GM12878 (cell line): ENCODE measurements at regions of chr5 and their contacts with region 1.

Region 1: GRCh38 chr5:172714491-172715421 is 56.2 kb downstream of the DUSP1 start:
- DNase-seq: no peak
- ATAC-seq: peak; percentile 89
- H3K4me3 ChIP-seq: no peak overlapping the region
- H3K27ac ChIP-seq: no peak overlapping the region
- H3K4me1 ChIP-seq: no peaks in the 10 kb centered on the region
- H3K27me3 ChIP-seq: no peaks in the 10 kb centered on the region; a peak in 1 of 4 replicates
- CTCF ChIP-seq: peak; percentile 66 to 95 (median 88)
- EP300 ChIP-seq: no peak
- POLR2A ChIP-seq: no peak
- RAD21 ChIP-seq: peak; percentile 40

Region 2: DNA sequence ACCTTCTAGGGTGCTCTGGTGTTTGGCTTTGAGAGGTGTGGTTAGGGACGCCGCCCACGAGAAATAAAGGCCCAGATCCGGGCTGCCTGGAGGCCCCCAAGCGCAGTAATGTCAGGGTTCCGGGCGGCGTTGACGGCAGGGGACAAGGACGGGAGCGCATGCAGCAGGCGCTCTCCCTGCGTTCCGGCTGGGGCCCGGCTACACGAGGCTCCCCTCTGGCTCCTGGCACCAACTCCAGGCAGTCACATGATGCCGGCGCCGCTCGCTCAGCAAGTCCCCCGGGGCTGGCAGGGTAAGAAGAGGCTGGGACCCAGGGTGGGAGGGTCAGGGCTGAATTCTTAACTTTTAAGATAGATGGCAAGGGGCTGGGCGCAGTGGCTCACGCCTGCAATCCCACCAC is 459.3 kb before region 1 on chr5:
- CTCF ChIA-PET with region 1: no interaction called
- POLR2A ChIA-PET with region 1: no interaction called
- RAD21 ChIA-PET with region 1: no interaction called
- SMC1A ChIA-PET with region 1: no interaction called
- in situ Hi-C with region 1: no loop called
- intact Hi-C with region 1: no loop called
- DNase-seq: no peak
- ATAC-seq: no peak
- H3K4me3 ChIP-seq: no peak overlapping the region
- H3K27ac ChIP-seq: no peak overlapping the region
- H3K4me1 ChIP-seq: no peaks in the 10 kb centered on the region
- H3K27me3 ChIP-seq: no peaks in the 10 kb centered on the region
- CTCF ChIP-seq: no peak
- EP300 ChIP-seq: no peak
- POLR2A ChIP-seq: no peak
- RAD21 ChIP-seq: no peak

Region 3: DNA sequence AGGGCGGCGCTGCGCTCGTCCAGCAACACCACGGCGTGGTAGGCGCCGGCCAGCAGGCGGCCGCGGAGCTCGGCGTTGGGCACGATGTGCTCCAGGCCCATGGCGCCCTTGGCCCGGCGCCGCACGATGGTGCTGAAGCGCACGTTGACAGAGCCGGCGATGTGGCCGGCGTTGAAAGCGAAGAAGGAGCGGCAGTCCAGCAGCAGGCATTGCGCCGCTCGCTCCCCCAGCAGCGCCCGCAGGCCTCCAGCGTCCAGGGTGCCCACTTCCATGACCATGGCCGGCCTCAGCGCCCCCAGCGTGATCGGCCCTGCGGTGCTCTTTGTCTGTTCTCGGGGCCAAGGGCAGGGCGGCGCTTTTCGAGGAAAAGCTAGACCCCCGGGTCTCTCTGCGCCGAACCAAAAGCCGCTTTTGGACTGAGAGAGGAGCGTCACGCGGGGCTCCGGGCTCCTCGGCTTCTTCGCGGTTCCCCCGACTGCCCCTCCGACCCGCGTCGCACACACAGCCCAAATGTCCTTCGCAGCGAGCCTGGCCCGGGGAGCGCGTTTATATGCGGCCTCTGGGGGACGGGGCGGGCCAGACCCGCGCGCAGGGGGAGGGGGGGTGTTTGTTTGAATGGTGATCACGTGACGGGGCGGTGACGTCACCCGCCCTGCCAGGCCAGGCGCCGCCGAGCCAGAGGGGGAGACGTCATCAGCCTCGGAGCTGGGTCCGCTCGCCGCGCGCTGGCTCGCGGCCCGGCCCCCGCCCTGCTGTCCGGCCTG is 56.1 kb after region 1 on chr5 and contains the start of gene DUSP1:
- CTCF ChIA-PET with region 1: interaction called, 40 read pairs
- POLR2A ChIA-PET with region 1: interaction called, 4 read pairs
- RAD21 ChIA-PET with region 1: interaction called, 13 read pairs
- SMC1A ChIA-PET with region 1: interaction called, 13 read pairs
- in situ Hi-C with region 1: no loop called
- intact Hi-C with region 1: loop called (anchors 2 kb)
- DNase-seq: no peak
- ATAC-seq: peak; percentile 76
- H3K4me3 ChIP-seq: peak within 1 kb of the TSS; percentile 73
- H3K27ac ChIP-seq: peak within 1 kb of the TSS; percentile 72
- H3K4me1 ChIP-seq: peaks cover 23% of the 10 kb centered on the region
- H3K27me3 ChIP-seq: no peaks in the 10 kb centered on the region
- CTCF ChIP-seq: peak; percentile 57 to 65 (median 59); a peak in 5 of 6 replicates
- EP300 ChIP-seq: 0 out of 4 replicates have a peak, but pooled peaks of 1 of the 2 experiments have one; percentile 32
- POLR2A ChIP-seq: peak; percentile 95
- RAD21 ChIP-seq: peak; percentile 48
- polyA plus RNA-seq, gene DUSP1: 1.4 to 1.9 TPM

Region 4: GRCh38 chr5:172833686-172834414 is 119.1 kb after region 1 on chr5 and contains the start of gene ERGIC1:
- CTCF ChIA-PET with region 1: interaction called, 8 read pairs
- POLR2A ChIA-PET with region 1: no interaction called
- RAD21 ChIA-PET with region 1: interaction called, 4 read pairs
- SMC1A ChIA-PET with region 1: interaction called, 3 read pairs
- in situ Hi-C with region 1: no loop called
- intact Hi-C with region 1: loop called (anchors 10 kb)
- DNase-seq: no peak
- ATAC-seq: peak; percentile 86
- H3K4me3 ChIP-seq: peak within 1 kb of the TSS; percentile 97
- H3K27ac ChIP-seq: peak within 1 kb of the TSS; percentile 95
- H3K4me1 ChIP-seq: peaks cover 33% of the 10 kb centered on the region
- H3K27me3 ChIP-seq: no peaks in the 10 kb centered on the region
- CTCF ChIP-seq: no peak
- EP300 ChIP-seq: no peak
- POLR2A ChIP-seq: peak; percentile 72
- RAD21 ChIP-seq: no peak
- polyA plus RNA-seq, gene ERGIC1: 8.8 to 21.0 TPM

Region 5: GRCh38 chr5:172910828-172911627 is 196.3 kb after region 1 on chr5:
- CTCF ChIA-PET with region 1: interaction called, 12 read pairs
- POLR2A ChIA-PET with region 1: no interaction called
- RAD21 ChIA-PET with region 1: interaction called, 5 read pairs
- SMC1A ChIA-PET with region 1: interaction called, 3 read pairs
- in situ Hi-C with region 1: no loop called
- intact Hi-C with region 1: loop called (anchors 5 kb)
- DNase-seq: peak; percentile 61
- ATAC-seq: peak; percentile 91
- H3K4me3 ChIP-seq: no peak overlapping the region
- H3K27ac ChIP-seq: peak overlapping the region; percentile 83
- H3K4me1 ChIP-seq: peaks cover 23% of the 10 kb centered on the region
- H3K27me3 ChIP-seq: no peaks in the 10 kb centered on the region
- CTCF ChIP-seq: peak; percentile 38 to 61 (median 41); a peak in 4 of 6 replicates
- EP300 ChIP-seq: no peak
- POLR2A ChIP-seq: no peak
- RAD21 ChIP-seq: peak; percentile 48; the same call in 1 of the 2 replicates

Region 6: GRCh38 chr5:172958331-172959046 is 243.7 kb after region 1 on chr5:
- CTCF ChIA-PET with region 1: interaction called, 11 read pairs
- POLR2A ChIA-PET with region 1: interaction called, 3 read pairs
- RAD21 ChIA-PET with region 1: interaction called, 4 read pairs
- SMC1A ChIA-PET with region 1: interaction called, 3 read pairs
- in situ Hi-C with region 1: no loop called
- intact Hi-C with region 1: no loop called
- DNase-seq: no peak
- ATAC-seq: peak; percentile 91
- H3K4me3 ChIP-seq: peak overlapping the region; percentile 99
- H3K27ac ChIP-seq: no peak overlapping the region
- H3K4me1 ChIP-seq: no peaks in the 10 kb centered on the region; the same call in 1 of the 2 replicates
- H3K27me3 ChIP-seq: no peaks in the 10 kb centered on the region
- CTCF ChIP-seq: no peak
- EP300 ChIP-seq: no peak
- POLR2A ChIP-seq: no peak
- RAD21 ChIP-seq: no peak